ENCODE measurements at regions of chr5 and their contacts with region 1.

Region 1: DNA sequence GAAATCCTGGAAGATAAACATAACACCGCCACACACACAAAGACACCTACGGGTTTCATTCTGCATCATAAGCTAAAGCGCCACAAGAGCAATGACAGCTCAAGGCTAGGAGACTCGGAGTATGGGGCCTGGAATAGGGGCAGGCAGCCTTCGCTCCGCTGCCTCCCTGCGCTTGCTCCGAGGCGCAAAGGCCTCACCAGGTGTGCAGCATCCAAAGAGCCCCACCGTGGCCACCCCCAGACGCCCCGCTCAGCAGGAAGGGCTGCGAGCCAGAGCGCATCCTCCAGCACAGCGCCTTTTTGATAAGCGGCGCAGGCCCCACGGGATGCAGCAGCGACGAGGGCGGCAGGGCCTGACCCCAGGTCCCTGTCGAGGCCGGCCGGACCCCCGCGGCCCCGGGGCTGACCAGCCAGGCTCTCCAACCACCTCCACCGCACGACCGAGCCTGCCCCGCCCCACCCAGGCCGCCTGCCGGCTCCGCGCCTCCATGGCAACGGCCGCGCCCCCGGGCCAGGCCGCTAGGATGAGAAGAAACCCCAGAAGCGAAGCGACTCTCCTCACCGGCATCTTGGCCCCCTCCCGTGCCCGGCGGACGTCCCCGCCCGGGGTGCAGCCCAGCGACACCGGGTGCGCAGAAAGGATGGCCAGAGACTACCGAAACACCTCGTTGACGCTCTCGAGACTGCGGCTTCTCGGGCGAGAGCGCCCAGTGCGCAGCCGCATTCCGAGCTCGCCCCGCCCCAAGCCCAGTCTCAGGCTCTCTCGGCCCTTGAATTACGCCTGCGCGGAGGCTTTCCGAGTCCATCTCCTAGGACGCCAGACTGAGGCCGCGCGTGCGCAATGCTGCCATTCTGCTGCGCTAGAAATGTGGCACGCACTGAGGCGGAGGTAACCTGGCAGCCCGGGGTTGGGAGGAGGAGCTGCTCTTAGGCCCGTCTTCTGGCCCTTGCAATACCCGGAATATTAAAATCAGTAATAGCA is at the start of gene KIF3A:
- DNase-seq: peak; percentile 93 to 99 (median 98)
- ATAC-seq: peak; percentile 97 to 100 (median 100)
- H3K4me3 ChIP-seq: peak within 1 kb of the TSS; percentile 58 to 97 (median 84)
- H3K27ac ChIP-seq: peak within 1 kb of the TSS in 10 of 12 donors; percentile 36 to 85 (median 63)
- H3K4me1 ChIP-seq: peaks cover 0 to 20% (median 9%) of the 10 kb centered on the region in 12 donors
- H3K27me3 ChIP-seq: peaks cover 0 to 5% (median 0%) of the 10 kb centered on the region in 9 donors
- CTCF ChIP-seq: peak in 3 of 12 donors; percentile 15 to 32 (median 21)
- POLR2A ChIP-seq: peak in 1 of 2 donors; percentile 63
- total RNA-seq, gene KIF3A: 5.8 to 19.3 (median 11.2) TPM

Region 2: DNA sequence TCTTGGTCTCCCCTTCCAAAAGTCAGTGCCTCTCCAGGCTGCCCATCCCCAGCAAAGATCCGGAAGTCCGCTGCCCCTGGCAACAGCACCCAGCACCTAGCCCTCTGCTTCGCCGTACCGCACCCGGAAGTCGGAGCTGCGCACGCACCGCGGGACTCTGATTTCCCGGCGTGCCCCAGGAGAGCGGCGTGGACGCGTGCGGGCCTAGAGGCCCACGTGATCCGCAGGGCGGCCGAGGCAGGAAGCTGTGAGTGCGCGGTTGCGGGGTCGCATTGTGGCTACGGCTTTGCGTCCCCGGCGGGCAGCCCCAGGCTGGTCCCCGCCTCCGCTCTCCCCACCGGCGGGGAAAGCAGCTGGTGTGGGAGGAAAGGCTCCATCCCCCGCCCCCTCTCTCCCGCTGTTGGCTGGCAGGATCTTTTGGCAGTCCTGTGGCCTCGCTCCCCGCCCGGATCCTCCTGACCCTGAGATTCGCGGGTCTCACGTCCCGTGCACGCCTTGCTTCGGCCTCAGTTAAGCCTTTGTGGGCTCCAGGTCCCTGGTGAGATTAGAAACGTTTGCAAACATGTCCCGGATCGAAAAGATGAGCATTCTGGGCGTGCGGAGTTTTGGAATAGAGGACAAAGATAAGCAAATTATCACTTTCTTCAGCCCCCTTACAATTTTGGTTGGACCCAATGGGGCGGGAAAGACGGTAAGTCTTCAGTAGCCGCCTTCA is 180.2 kb before region 1 on chr5 and contains the start of gene RAD50:
- intact Hi-C with region 1: no loop called
- DNase-seq: peak; percentile 89 to 97 (median 95)
- ATAC-seq: peak; percentile 97 to 99 (median 98)
- H3K4me3 ChIP-seq: peak within 1 kb of the TSS; percentile 54 to 93 (median 70)
- H3K27ac ChIP-seq: peak within 1 kb of the TSS; percentile 35 to 91 (median 86)
- H3K4me1 ChIP-seq: peaks cover 0 to 26% (median 12%) of the 10 kb centered on the region in 12 donors
- H3K27me3 ChIP-seq: no peaks in the 10 kb centered on the region
- CTCF ChIP-seq: no peak
- POLR2A ChIP-seq: peak in 1 of 2 donors; percentile 73
- total RNA-seq, gene RAD50: 17.5 to 41.8 (median 32.4) TPM

Region 3: GRCh38 chr5:132777209-132778069 is 40.3 kb after region 1 on chr5 and contains the start of gene SEPTIN8:
- intact Hi-C with region 1: loop called in 1 of 10 experiments (anchors 5 kb)
- DNase-seq: peak; percentile 56 to 75 (median 70)
- ATAC-seq: peak in 3 of 4 donors; percentile 58 to 66 (median 59)
- H3K4me3 ChIP-seq: peak within 1 kb of the TSS; percentile 65 to 98 (median 90)
- H3K27ac ChIP-seq: peak within 1 kb of the TSS; percentile 72 to 92 (median 86)
- H3K4me1 ChIP-seq: peaks cover 0 to 52% (median 33%) of the 10 kb centered on the region in 12 donors
- H3K27me3 ChIP-seq: peaks cover 0 to 4% (median 0%) of the 10 kb centered on the region in 9 donors
- CTCF ChIP-seq: peak in 1 of 12 donors; percentile 11
- POLR2A ChIP-seq: peak in 1 of 2 donors; percentile 15
- total RNA-seq, gene SEPTIN8: 24.5 to 47.6 (median 33.8) TPM

Measured in heart left ventricle (tissue), 16 donors.